ENCODE measurements at regions of chr20 and their contacts with region 1.

Region 1: DNA sequence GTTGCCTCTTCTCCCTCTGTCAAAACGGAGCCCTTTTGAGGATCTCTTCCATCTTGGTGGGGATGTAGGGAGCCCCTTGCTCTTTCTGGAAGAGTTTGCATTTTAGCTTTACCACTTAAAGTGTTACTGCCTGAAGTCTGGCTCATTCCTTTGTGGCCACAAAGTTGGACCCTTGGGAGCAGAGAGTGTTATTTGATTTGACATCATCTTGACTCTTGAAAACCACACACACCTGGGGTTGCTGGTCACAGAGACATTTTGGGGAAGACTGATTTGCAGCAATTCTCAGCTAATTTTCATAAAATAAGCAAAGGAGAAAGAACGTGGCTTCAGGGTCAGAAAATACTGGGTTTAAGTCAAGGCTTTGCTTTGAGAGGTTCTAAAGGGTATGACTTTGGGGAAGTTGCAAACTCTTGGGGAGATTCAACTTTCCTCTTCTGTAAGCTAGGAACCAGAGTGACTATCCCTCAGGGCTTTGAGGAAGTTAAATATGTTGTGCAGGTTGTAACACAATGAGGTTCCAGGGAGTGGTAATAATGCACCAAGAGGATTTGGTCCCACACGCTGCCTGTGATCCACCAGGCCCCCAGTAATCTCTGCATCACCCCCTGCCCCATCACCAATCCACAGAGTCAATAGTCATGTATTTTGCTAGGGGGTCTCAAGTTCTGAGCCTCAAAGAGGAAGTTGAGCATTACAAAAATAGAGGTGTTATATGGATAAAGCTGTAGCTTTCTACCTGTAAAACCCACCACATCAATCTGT is 141.6 kb upstream of the SLC24A3 start:
- DNase-seq: no peak
- CTCF ChIP-seq: no peak

Region 2: GRCh38 chr20:18428490-18429173 is 642.2 kb before region 1 on chr20:
- CTCF ChIA-PET with region 1: no interaction called
- POLR2A ChIA-PET with region 1: no interaction called
- DNase-seq: no peak
- CTCF ChIP-seq: no peak

Region 3: GRCh38 chr20:19056909-19057308 is 14.0 kb before region 1 on chr20:
- CTCF ChIA-PET with region 1: interaction called, 24 read pairs
- POLR2A ChIA-PET with region 1: no interaction called
- DNase-seq: no peak
- CTCF ChIP-seq: no peak

Measured in GM10248 (cell line).